GM12878 (cell line): ENCODE measurements at regions of chr6 and their contacts with region 1.

Region 1: GRCh38 chr6:100479179-100480035 is 14.7 kb upstream of the SIM1 start:
- DNase-seq: peak; percentile 34
- ATAC-seq: peak; percentile 73
- H3K4me3 ChIP-seq: no peak overlapping the region
- H3K27ac ChIP-seq: no peak overlapping the region
- H3K4me1 ChIP-seq: peaks cover 7% of the 10 kb centered on the region
- H3K27me3 ChIP-seq: no peaks in the 10 kb centered on the region
- CTCF ChIP-seq: peak; percentile 63 to 80 (median 76)
- EP300 ChIP-seq: no peak
- POLR2A ChIP-seq: no peak
- RAD21 ChIP-seq: peak; percentile 95

Region 2: GRCh38 chr6:100001915-100002388 is 477.5 kb before region 1 on chr6:
- CTCF ChIA-PET with region 1: interaction called, 5 read pairs
- POLR2A ChIA-PET with region 1: no interaction called
- RAD21 ChIA-PET with region 1: interaction called, 5 read pairs
- SMC1A ChIA-PET with region 1: interaction called, 5 read pairs
- in situ Hi-C with region 1: loop called (anchors 5 kb)
- intact Hi-C with region 1: loop called (anchors 2 kb)
- DNase-seq: no peak
- ATAC-seq: peak; percentile 95
- H3K4me3 ChIP-seq: no peak overlapping the region
- H3K27ac ChIP-seq: no peak overlapping the region
- H3K4me1 ChIP-seq: no peaks in the 10 kb centered on the region
- H3K27me3 ChIP-seq: peaks cover 0 to 4% of the 10 kb centered on the region in 2 experiments; a peak in 1 of 4 replicates
- CTCF ChIP-seq: peak; percentile 87 to 93 (median 91)
- EP300 ChIP-seq: no peak
- POLR2A ChIP-seq: no peak
- RAD21 ChIP-seq: peak; percentile 76

Region 3: DNA sequence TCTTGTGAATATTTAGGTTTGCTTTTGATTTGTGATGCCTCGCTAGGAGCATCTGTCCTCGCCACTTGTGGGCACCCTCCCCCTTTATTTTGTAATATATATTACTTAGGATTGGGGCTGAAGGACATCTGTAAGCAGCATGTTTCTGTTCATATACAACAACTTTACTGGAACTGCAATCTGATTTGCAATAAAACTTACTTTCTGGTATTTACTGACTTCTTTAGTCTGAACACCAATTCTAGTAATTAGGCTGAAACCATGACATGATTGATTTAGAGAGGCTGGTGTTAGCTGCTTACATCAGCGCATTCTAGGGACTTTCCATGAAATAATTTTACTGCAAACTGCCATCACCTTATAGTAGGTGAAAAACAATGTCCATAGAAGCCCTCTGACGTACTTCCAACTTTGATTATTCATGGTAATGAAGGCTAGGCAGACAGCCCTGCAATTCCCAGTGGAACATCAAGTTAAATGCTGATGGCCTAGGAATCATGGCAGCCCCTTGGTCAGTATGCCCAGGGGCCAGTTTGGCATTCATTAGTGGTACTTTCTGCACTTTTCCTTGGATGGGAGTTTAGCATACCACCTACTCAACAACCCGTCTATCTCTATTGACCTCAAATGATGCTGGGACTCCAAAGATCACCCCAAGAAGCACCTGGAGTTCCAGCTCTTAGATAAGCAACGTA is 352.5 kb before region 1 on chr6:
- CTCF ChIA-PET with region 1: interaction called, 23 read pairs
- POLR2A ChIA-PET with region 1: no interaction called
- RAD21 ChIA-PET with region 1: interaction called, 3 read pairs
- SMC1A ChIA-PET with region 1: interaction called, 13 read pairs
- in situ Hi-C with region 1: no loop called
- intact Hi-C with region 1: no loop called
- DNase-seq: no peak
- ATAC-seq: peak; percentile 94
- H3K4me3 ChIP-seq: no peak overlapping the region
- H3K27ac ChIP-seq: no peak overlapping the region
- H3K4me1 ChIP-seq: no peaks in the 10 kb centered on the region
- H3K27me3 ChIP-seq: no peaks in the 10 kb centered on the region
- CTCF ChIP-seq: no peak
- EP300 ChIP-seq: peak; percentile 46 to 73; a peak in 3 of 4 replicates
- POLR2A ChIP-seq: no peak
- RAD21 ChIP-seq: no peak

Region 4: GRCh38 chr6:100370265-100370664 is 109.1 kb before region 1 on chr6:
- CTCF ChIA-PET with region 1: no interaction called
- POLR2A ChIA-PET with region 1: no interaction called
- RAD21 ChIA-PET with region 1: no interaction called
- SMC1A ChIA-PET with region 1: no interaction called
- in situ Hi-C with region 1: no loop called
- intact Hi-C with region 1: loop called (anchors 1 kb)
- DNase-seq: no peak
- ATAC-seq: no peak
- H3K4me3 ChIP-seq: no peak overlapping the region
- H3K27ac ChIP-seq: no peak overlapping the region
- H3K4me1 ChIP-seq: no peaks in the 10 kb centered on the region
- H3K27me3 ChIP-seq: no peaks in the 10 kb centered on the region
- CTCF ChIP-seq: 0 out of 6 replicates have a peak, but pooled peaks of 1 of the 3 experiments have one; percentile 9
- EP300 ChIP-seq: no peak
- POLR2A ChIP-seq: no peak
- RAD21 ChIP-seq: 0 out of 2 replicates have a peak, but pooled peaks have one; percentile 11

Region 5: GRCh38 chr6:100657678-100658330 is 178.4 kb after region 1 on chr6:
- CTCF ChIA-PET with region 1: interaction called, 11 read pairs
- POLR2A ChIA-PET with region 1: no interaction called
- RAD21 ChIA-PET with region 1: interaction called, 5 read pairs
- SMC1A ChIA-PET with region 1: interaction called, 4 read pairs
- in situ Hi-C with region 1: no loop called
- intact Hi-C with region 1: loop called (anchors 5 kb)
- DNase-seq: no peak
- ATAC-seq: peak; percentile 66
- H3K4me3 ChIP-seq: no peak overlapping the region
- H3K27ac ChIP-seq: no peak overlapping the region
- H3K4me1 ChIP-seq: no peaks in the 10 kb centered on the region
- H3K27me3 ChIP-seq: no peaks in the 10 kb centered on the region
- CTCF ChIP-seq: peak; percentile 43 to 78 (median 45); a peak in 3 of 6 replicates
- EP300 ChIP-seq: no peak
- POLR2A ChIP-seq: no peak
- RAD21 ChIP-seq: peak; percentile 61

Region 6: GRCh38 chr6:100968943-100969342 is 489.5 kb after region 1 on chr6:
- CTCF ChIA-PET with region 1: no interaction called
- POLR2A ChIA-PET with region 1: no interaction called
- RAD21 ChIA-PET with region 1: no interaction called
- SMC1A ChIA-PET with region 1: no interaction called
- in situ Hi-C with region 1: no loop called
- intact Hi-C with region 1: no loop called
- DNase-seq: no peak
- ATAC-seq: no peak
- H3K4me3 ChIP-seq: no peak overlapping the region
- H3K27ac ChIP-seq: no peak overlapping the region
- H3K4me1 ChIP-seq: no peaks in the 10 kb centered on the region
- H3K27me3 ChIP-seq: no peaks in the 10 kb centered on the region
- CTCF ChIP-seq: no peak
- EP300 ChIP-seq: no peak
- POLR2A ChIP-seq: no peak
- RAD21 ChIP-seq: no peak